H1 (cell line): ENCODE measurements at regions of chr18 and their contacts with region 1.

Region 1: GRCh38 chr18:51171223-51171622 is 26.3 kb downstream of the MEX3C start:
- DNase-seq: no peak
- H3K4me3 ChIP-seq: no peak overlapping the region
- H3K27ac ChIP-seq: no peak overlapping the region
- H3K4me1 ChIP-seq: peaks cover 2 to 17% (median 9%) of the 10 kb centered on the region in 4 experiments; a peak in 5 of 7 replicates
- H3K27me3 ChIP-seq: peaks cover 0 to 1% (median 0%) of the 10 kb centered on the region in 4 experiments; a peak in 3 of 7 replicates
- CTCF ChIP-seq: no peak
- EP300 ChIP-seq: no peak
- POLR2A ChIP-seq: no peak
- RAD21 ChIP-seq: no peak

Region 2: GRCh38 chr18:51182824-51183223 is 11.6 kb after region 1 on chr18:
- CTCF ChIA-PET with region 1: interaction called, 8 read pairs
- POLR2A ChIA-PET with region 1: interaction called, 11 read pairs
- DNase-seq: no peak
- H3K4me3 ChIP-seq: no peak overlapping the region
- H3K27ac ChIP-seq: no peak overlapping the region
- H3K4me1 ChIP-seq: peaks cover 0 to 5% (median 4%) of the 10 kb centered on the region in 4 experiments; a peak in 4 of 7 replicates
- H3K27me3 ChIP-seq: no peaks in the 10 kb centered on the region
- CTCF ChIP-seq: no peak
- EP300 ChIP-seq: no peak
- POLR2A ChIP-seq: no peak
- RAD21 ChIP-seq: no peak

Region 3: GRCh38 chr18:51197661-51198424 is 26.6 kb after region 1 on chr18 and contains the start of gene MEX3C:
- CTCF ChIA-PET with region 1: interaction called, 11 read pairs
- POLR2A ChIA-PET with region 1: interaction called, 128 read pairs
- DNase-seq: peak; percentile 98 to 99
- H3K4me3 ChIP-seq: peak within 1 kb of the TSS; percentile 97 to 100 (median 99)
- H3K27ac ChIP-seq: peak within 1 kb of the TSS; percentile 92; the same call in 1 of the 2 replicates
- H3K4me1 ChIP-seq: peaks cover 0 to 3% (median 1%) of the 10 kb centered on the region in 4 experiments; a peak in 3 of 7 replicates
- H3K27me3 ChIP-seq: no peaks in the 10 kb centered on the region
- CTCF ChIP-seq: peak; percentile 0 to 36 (median 24); a peak in 2 of 4 replicates
- EP300 ChIP-seq: no peak
- POLR2A ChIP-seq: peak; percentile 91 to 92
- RAD21 ChIP-seq: no peak
- total RNA-seq, gene MEX3C: 102 and 103 TPM in 2 replicates